Esophagus muscularis mucosa (tissue), 4 donors: ENCODE measurements at regions of chr2 and their contacts with region 1.

Region 1: GRCh38 chr2:23330214-23330613 is 54.8 kb upstream of the KLHL29 start:
- DNase-seq: no peak
- H3K4me3 ChIP-seq: no peak overlapping the region
- H3K27ac ChIP-seq: no peak overlapping the region
- H3K4me1 ChIP-seq: peaks cover 0 to 7% (median 2%) of the 10 kb centered on the region in 4 donors
- H3K27me3 ChIP-seq: peaks cover 0 to 7% (median 0%) of the 10 kb centered on the region in 4 donors
- CTCF ChIP-seq: no peak
- EP300 ChIP-seq: no peak
- POLR2A ChIP-seq: no peak

Region 2: GRCh38 chr2:22800412-22800811 is 529.8 kb before region 1 on chr2:
- intact Hi-C with region 1: no loop called
- DNase-seq: no peak
- H3K4me3 ChIP-seq: no peak overlapping the region
- H3K27ac ChIP-seq: no peak overlapping the region
- H3K4me1 ChIP-seq: no peaks in the 10 kb centered on the region
- H3K27me3 ChIP-seq: peaks cover 0 to 3% (median 0%) of the 10 kb centered on the region in 4 donors
- CTCF ChIP-seq: no peak
- EP300 ChIP-seq: no peak
- POLR2A ChIP-seq: no peak

Region 3: DNA sequence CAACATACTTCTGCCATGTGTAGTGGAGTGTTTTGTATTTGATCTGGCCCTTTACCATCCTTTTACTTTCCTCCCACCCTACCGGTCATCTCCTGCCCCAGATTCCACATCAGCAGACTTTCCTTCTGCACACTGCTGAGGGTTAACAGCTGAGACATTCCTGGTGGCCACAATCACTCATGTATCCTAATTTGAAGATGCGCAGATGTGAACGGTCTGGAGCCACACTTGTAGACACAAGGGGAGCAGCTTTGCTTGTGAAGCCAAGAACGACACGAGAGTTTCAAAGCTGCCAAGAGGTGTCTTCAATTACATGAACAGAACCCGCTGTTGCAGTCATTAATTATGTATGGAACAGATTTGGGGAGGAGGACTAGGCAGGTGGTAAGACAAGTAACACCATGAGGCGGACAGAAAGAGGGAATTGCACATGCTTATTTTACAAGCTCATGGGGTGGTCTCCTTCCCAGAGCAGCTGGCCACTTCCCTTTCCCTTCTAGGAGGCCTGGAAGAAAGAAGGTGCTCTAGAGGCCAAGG is 205.9 kb before region 1 on chr2:
- intact Hi-C with region 1: loop called (anchors 10 kb)
- DNase-seq: no peak
- H3K4me3 ChIP-seq: no peak overlapping the region
- H3K27ac ChIP-seq: no peak overlapping the region
- H3K4me1 ChIP-seq: no peaks in the 10 kb centered on the region
- H3K27me3 ChIP-seq: no peaks in the 10 kb centered on the region
- CTCF ChIP-seq: no peak
- EP300 ChIP-seq: no peak
- POLR2A ChIP-seq: no peak